ENCODE measurements at regions of chr19 and their contacts with region 1.

Region 1: DNA sequence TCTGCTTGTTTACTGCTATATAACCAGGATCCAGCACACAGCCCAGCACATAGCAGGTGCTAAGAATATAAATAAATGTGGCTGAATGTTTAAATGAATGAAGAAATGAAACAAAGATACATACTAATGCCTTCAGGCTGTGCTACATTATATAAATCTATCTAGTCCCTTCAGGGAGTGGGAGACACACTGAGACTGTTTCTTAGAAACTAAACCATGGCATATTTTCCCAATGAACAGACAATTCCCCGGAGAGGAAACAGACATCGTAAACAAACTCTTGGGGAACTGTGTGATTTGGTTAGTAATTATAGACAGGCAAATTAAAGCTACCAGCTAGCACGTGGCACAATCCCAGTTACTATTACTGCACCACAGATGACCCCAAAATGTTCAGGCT is 9.7 kb upstream of the FEM1A start:
- DNase-seq: no peak
- H3K4me3 ChIP-seq: no peak overlapping the region
- H3K27ac ChIP-seq: no peak overlapping the region
- H3K4me1 ChIP-seq: no peaks in the 10 kb centered on the region
- H3K27me3 ChIP-seq: peaks cover 41% of the 10 kb centered on the region
- CTCF ChIP-seq: no peak

Region 2: GRCh38 chr19:5073153-5073844 is 291.5 kb after region 1 on chr19:
- CTCF ChIA-PET with region 1: interaction called, 16 read pairs
- POLR2A ChIA-PET with region 1: no interaction called
- intact Hi-C with region 1: no loop called
- DNase-seq: no peak
- H3K4me3 ChIP-seq: no peak overlapping the region
- H3K27ac ChIP-seq: no peak overlapping the region
- H3K4me1 ChIP-seq: no peaks in the 10 kb centered on the region
- H3K27me3 ChIP-seq: no peaks in the 10 kb centered on the region
- CTCF ChIP-seq: no peak

Measured in PC-9 (cell line).